OCI-LY7 (cell line): ENCODE measurements at regions of chr20 and their contacts with region 1.

Region 1: GRCh38 chr20:543369-544152 is at the start of gene CSNK2A1:
- DNase-seq: peak; percentile 98
- H3K4me3 ChIP-seq: peak within 1 kb of the TSS; percentile 89
- H3K27ac ChIP-seq: peak within 1 kb of the TSS; percentile 68
- H3K4me1 ChIP-seq: peaks cover 29% of the 10 kb centered on the region
- CTCF ChIP-seq: no peak
- total RNA-seq, gene CSNK2A1: 69.8 and 90.8 TPM in 2 replicates

Region 2: DNA sequence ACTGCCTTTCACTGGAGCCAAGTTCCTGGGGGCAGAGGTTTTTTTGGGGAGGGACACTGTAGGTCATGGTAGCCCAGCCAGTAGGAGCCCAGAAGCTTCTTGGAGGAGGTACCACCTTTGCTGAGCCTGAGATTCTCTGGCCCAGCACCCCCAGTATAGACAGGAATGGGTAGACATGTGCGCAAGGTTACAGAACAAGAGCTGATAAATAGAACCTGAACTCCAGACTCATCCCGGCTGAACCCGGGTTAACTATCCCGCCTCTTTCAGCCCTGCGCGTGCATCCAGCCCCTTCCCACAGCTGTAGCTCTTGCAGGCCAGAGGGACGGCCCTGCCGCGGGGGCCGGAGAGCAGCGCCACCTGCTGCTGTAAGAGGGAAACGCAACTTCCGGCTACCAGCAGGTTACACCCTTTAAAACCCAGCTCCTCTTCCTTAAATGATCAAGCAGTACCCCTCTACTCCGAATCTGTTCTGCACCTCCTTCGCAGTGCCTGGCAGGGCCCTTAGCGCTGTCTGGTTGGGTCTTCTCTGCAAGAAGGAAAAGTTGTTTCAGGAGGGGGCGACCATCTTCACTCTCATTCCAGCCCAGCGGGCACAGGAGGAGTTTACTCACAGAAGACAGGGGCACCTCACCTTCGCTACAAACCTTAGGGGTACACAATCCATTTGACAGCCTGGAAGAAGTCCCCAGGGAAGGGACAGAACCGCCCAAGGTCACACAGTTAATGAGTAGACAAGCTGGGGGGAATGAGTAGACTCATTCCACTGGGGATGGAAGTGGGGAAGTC is 102.0 kb after region 1 on chr20:
- CTCF ChIA-PET with region 1: interaction called, 10 read pairs
- POLR2A ChIA-PET with region 1: no interaction called
- intact Hi-C with region 1: loop called (anchors 5 kb)
- DNase-seq: peak; percentile 76
- H3K4me3 ChIP-seq: no peak overlapping the region
- H3K27ac ChIP-seq: no peak overlapping the region
- H3K4me1 ChIP-seq: peaks cover 3% of the 10 kb centered on the region
- CTCF ChIP-seq: peak; percentile 94

Region 3: GRCh38 chr20:1118336-1119127 is 575.0 kb after region 1 on chr20 and contains the start of gene PSMF1:
- CTCF ChIA-PET with region 1: no interaction called
- POLR2A ChIA-PET with region 1: no interaction called
- intact Hi-C with region 1: loop called (anchors 10 kb)
- DNase-seq: peak; percentile 97
- H3K4me3 ChIP-seq: peak within 1 kb of the TSS; percentile 96
- H3K27ac ChIP-seq: peak within 1 kb of the TSS; percentile 53
- H3K4me1 ChIP-seq: peaks cover 41% of the 10 kb centered on the region
- CTCF ChIP-seq: no peak
- total RNA-seq, gene PSMF1: 31.7 and 34.7 TPM in 2 replicates